Caco-2 (cell line): ENCODE measurements at regions of chr15 and their contacts with region 1.

Region 1: DNA sequence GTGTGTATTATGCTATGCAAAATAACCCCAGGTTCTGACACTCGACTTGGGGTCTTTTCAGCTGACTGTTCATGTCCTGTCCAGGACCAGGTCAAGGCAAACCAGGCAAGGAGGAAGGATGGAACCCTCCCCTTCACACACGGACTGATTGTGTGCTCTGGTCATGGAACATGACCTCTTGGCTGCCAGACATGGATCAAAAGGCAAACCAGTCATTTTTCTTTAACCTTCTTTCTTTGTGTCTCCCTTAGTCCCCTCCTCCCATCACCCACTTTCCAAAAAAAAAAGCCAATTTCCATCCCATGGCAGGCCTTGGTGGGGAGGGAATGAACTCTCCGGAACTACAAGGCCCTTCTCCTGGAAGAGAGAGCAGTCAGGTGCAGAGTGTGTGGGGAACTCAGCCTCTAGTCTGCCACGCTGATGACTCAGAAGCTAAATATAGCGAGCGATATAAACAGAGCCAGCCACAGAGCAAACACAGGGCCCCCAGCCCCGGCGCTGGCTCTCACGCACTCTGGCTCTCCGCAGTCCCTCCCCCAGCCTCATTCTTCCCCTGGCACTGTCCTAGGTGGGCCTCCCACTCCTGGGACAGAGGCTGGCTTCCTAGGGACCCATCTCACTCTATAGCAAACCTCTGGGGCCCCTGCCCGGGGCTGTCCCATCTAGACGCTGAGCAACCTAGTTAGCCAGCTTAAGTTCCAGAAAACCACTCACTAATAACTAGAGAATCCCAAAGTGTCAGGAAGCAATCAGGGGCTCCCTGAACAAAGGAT is 10.0 kb downstream of the BMF start:
- DNase-seq: peak; percentile 92 to 94
- H3K4me3 ChIP-seq: no peak overlapping the region
- H3K4me3 Mint-ChIP-seq: peak overlapping the region; percentile 65
- H3K27ac Mint-ChIP-seq: peak overlapping the region; percentile 92
- H3K4me1 ChIP-seq: peaks cover 89% of the 10 kb centered on the region
- H3K4me1 Mint-ChIP-seq: peaks cover 64% of the 10 kb centered on the region
- H3K27me3 ChIP-seq: no peaks in the 10 kb centered on the region
- H3K27me3 Mint-ChIP-seq: no peaks in the 10 kb centered on the region
- CTCF ChIP-seq: no peak

Region 2: DNA sequence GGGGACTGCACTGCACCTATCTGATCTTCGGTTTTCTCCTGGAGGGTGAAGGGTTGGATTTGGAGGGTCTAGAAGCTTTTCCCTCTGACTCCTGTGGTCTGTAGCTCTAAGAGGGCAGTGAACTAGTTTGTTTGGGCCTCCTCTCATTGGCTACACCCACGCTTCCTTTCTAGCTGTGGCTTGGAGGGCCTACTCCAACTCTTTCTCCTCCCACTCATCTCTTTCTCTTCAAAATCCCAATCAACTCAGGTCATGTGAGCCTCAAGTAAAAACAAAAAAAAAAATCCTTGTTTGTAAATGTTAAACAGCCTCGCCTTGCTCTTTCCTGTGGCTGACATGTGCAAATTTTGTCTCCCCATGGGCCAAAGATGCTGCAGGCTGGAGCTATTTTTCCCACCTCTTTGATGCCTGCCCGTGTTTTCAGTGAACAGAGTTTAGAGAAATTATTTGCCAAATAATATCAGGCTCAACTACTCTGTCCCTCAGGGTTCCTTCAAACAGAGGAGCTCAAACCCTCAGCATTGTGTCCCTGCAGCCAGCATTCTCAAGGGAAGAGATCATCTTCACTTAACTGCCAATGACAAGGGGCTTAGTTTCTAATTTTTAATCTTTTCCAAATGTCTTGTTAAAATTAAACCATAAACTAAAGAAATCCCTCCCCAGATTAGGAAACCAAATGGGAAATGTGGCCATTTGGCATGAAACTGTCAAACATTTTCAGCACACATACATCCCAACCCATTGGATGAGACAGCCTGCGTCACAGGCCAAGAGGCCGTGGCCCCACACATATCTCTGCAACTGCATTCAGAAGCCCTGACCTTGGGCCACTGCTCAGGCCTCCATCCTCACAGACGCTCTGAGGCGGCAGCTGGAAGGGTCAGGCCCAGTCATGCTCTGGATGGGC is 632.6 kb before region 1 on chr15:
- CTCF ChIA-PET with region 1: no interaction called
- POLR2A ChIA-PET with region 1: no interaction called
- intact Hi-C with region 1: no loop called
- DNase-seq: no peak
- H3K4me3 ChIP-seq: no peak overlapping the region
- H3K4me3 Mint-ChIP-seq: no peak overlapping the region
- H3K27ac Mint-ChIP-seq: no peak overlapping the region
- H3K4me1 ChIP-seq: no peaks in the 10 kb centered on the region; the same call in 1 of the 2 replicates
- H3K4me1 Mint-ChIP-seq: no peaks in the 10 kb centered on the region
- H3K27me3 ChIP-seq: no peaks in the 10 kb centered on the region
- H3K27me3 Mint-ChIP-seq: no peaks in the 10 kb centered on the region
- CTCF ChIP-seq: no peak

Region 3: DNA sequence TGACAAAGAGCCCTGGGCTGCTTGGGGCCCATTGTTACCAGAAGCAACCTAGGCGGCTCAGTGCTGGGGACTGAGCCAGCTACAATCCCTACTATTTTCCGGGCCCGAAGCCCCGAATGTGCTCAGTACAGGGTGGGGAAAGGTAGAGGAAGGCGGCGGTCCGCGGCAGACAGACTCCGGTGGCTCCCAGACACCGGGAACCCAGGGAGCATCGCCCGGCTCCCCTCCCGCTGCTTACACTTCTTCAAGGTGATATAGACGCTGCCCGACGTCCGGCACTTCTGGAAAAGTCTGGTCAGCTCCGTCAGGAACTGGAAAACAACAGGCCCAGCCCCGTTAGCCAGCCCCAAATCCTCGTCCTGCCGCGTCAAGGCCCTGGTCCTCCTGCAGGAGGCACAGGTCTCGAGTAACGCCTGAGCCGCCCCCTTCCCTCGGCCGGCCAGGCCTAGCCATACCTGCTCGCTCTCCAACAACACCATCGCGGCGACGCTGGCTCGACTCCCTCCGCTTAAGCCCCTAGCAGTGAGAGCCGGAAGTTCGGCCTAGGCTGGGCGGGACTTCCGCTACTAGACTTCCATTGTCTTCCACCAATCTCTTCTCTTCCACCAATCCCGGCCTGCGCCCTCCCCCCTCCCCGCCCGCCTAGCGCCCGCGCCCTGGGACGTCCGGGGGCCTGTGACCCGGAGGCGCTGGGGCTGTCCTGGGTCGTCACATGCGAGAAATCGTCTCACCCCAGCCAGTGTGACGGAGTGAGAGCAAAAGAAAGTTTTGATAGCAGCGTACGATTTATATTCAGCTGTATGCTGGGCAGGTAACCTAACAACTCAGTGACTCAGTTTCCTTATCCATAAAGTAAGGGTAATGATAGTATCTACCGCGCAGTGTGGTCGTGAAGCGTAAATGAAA is 59.8 kb before region 1 on chr15 and contains the start of gene SRP14:
- CTCF ChIA-PET with region 1: no interaction called
- POLR2A ChIA-PET with region 1: interaction called, 10 read pairs
- intact Hi-C with region 1: no loop called
- DNase-seq: peak; percentile 90 to 92
- H3K4me3 ChIP-seq: peak within 1 kb of the TSS; percentile 78
- H3K4me3 Mint-ChIP-seq: peak within 1 kb of the TSS; percentile 98
- H3K27ac Mint-ChIP-seq: peak within 1 kb of the TSS; percentile 97
- H3K4me1 ChIP-seq: 0 out of 2 replicates have a peak, but pooled peaks cover 4% of the 10 kb centered on the region
- H3K4me1 Mint-ChIP-seq: peaks cover 8% of the 10 kb centered on the region
- H3K27me3 ChIP-seq: no peaks in the 10 kb centered on the region
- H3K27me3 Mint-ChIP-seq: no peaks in the 10 kb centered on the region
- CTCF ChIP-seq: no peak
- total RNA-seq, gene SRP14: 220 and 223 TPM in 2 replicates

Region 4: DNA sequence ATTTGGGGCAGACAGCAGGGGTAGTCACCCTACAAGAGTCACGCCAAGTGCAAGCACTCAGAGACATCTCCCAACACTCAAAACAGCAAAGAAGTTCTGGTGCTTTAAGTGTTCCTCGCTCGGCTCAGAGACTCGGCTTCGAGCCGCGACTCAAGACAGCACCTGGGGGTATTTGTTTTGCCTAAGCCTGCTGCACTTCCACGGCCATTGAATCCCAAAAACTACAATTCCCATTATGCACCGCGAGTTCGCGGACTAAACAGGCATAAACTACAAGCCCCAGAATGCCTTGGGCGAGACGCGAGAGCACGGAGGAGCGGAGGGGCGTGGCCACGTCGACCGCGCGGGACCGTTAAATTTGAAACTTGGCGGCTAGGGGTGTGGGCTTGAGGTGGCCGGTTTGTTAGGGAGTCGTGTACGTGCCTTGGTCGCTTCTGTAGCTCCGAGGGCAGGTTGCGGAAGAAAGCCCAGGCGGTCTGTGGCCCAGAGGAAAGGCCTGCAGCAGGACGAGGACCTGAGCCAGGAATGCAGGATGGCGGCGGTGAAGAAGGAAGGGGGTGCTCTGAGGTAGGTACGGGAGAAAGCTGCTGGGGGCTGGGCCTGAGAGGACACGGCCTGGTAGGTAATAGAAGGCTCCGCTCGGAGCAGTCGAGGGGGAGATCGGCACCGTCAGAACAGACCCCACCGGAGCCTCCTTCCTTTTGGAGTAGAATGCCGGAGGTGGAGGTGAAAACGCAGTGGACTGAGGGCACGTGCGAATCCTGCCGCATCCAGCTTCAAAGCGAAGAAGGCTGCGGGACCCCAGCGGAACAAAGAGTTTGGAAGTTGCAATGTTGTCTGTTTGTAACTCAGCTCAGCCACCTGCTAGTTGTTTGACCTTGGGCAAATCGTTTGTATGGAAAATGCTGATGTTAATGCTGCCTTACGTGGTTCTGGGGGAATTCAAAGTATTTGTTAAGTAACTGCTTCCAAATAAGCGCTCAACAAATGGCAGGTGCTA is 62.3 kb after region 1 on chr15 and contains the start of gene BUB1B:
- CTCF ChIA-PET with region 1: no interaction called
- POLR2A ChIA-PET with region 1: interaction called, 10 read pairs
- intact Hi-C with region 1: no loop called
- DNase-seq: peak; percentile 95
- H3K4me3 ChIP-seq: peak within 1 kb of the TSS; percentile 82
- H3K4me3 Mint-ChIP-seq: no peak within 1 kb of the TSS
- H3K27ac Mint-ChIP-seq: no peak within 1 kb of the TSS
- H3K4me1 ChIP-seq: peaks cover 18% of the 10 kb centered on the region
- H3K4me1 Mint-ChIP-seq: peaks cover under 1% of the 10 kb centered on the region
- H3K27me3 ChIP-seq: no peaks in the 10 kb centered on the region
- H3K27me3 Mint-ChIP-seq: no peaks in the 10 kb centered on the region
- CTCF ChIP-seq: no peak
- total RNA-seq, gene BUB1B: 62.7 and 73.5 TPM in 2 replicates

Region 5: DNA sequence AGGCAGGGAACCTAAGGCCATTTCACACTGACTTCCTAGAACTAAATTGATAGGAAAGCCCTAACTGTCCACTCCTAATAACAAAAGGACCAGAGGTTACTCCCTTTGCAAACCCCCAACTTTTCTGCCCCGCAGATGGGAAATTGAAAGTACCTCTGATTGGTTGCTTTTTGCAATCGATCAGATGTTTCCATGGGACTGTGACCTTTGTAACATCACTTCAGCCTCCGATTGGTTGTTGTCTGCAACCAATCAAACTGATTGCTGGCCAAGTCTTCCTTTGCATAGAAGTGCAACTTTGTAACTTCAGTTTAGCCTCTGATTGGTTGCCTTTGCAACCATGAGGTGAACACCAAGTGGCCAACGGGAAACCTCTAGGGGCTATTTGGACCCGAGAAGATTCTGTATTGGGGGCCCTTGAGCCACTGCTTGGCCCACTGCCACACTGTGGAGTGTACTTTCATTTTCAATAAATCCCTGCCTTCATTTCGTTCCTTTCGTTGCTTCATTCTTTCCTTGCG is 484.1 kb after region 1 on chr15:
- CTCF ChIA-PET with region 1: no interaction called
- POLR2A ChIA-PET with region 1: interaction called, 11 read pairs
- intact Hi-C with region 1: no loop called
- DNase-seq: peak; percentile 81 to 85
- H3K4me3 ChIP-seq: peak overlapping the region; percentile 42
- H3K4me3 Mint-ChIP-seq: peak overlapping the region; percentile 87
- H3K27ac Mint-ChIP-seq: peak overlapping the region; percentile 88
- H3K4me1 ChIP-seq: 0 out of 2 replicates have a peak, but pooled peaks cover 3% of the 10 kb centered on the region
- H3K4me1 Mint-ChIP-seq: peaks cover 7% of the 10 kb centered on the region
- H3K27me3 ChIP-seq: no peaks in the 10 kb centered on the region
- H3K27me3 Mint-ChIP-seq: no peaks in the 10 kb centered on the region
- CTCF ChIP-seq: no peak